ENCODE measurements at regions of chr1 and their contacts with region 1.

Region 1: DNA sequence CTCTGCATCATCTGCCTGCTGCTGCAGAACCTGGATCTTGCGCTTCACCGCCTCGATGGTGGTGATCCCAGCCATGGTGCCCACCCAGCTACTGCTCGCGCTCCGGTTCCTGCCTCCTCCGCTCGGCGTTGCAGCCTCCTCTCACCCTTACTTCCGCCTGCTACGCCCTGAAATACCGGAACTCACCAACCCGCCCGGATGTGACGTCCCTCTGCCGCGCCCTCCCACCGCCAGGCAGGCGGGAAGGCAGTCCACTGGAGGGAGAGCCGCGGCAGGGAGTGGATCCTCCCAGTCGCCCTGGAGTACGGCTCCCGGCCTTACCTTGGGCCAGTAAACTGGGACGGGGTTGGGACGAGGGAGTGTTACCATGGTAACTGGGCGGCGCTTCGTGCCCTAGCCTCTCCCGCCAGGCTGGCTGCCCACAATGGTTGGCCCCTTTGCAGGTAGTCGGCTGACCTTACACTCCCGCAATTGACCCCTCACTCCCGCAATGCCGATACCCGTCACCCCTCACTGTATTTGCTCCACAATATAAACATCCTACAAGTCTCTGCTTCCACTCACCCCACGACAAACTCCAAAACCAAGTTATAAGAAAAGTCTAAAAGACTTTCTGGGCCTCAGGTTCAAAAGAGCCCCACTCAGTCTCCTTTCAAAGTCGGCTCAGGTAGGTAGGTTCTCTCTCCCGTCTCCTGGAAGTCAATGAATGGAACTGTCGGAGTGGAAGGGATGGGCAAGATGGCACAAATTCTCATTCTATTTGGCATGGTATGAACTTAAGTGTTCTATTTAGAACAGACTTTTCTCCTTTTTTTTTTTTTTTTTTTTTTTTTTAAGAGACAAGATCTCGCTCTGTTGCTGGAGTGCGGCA is 8.6 kb downstream of the TPM3 start:
- DNase-seq: peak; percentile 91 to 96 (median 92)
- H3K4me3 ChIP-seq: peak overlapping the region; percentile 74 to 90
- H3K4me3 Mint-ChIP-seq: peak overlapping the region; percentile 99 to 100 (median 100)
- H3K27ac ChIP-seq: peak overlapping the region; percentile 93
- H3K27ac Mint-ChIP-seq: peak overlapping the region; percentile 98 to 100 (median 100)
- H3K4me1 ChIP-seq: peaks cover 42% of the 10 kb centered on the region
- H3K4me1 Mint-ChIP-seq: peaks cover 34 to 62% (median 46%) of the 10 kb centered on the region in 4 donors
- H3K27me3 ChIP-seq: no peaks in the 10 kb centered on the region
- H3K27me3 Mint-ChIP-seq: no peaks in the 10 kb centered on the region

Region 2: GRCh38 chr1:154006136-154006535 is 177.1 kb before region 1 on chr1:
- CTCF ChIA-PET with region 1: no interaction called
- POLR2A ChIA-PET with region 1: no interaction called
- intact Hi-C with region 1: no loop called
- DNase-seq: no peak
- H3K4me3 ChIP-seq: no peak overlapping the region
- H3K4me3 Mint-ChIP-seq: no peak overlapping the region
- H3K27ac ChIP-seq: no peak overlapping the region
- H3K27ac Mint-ChIP-seq: no peak overlapping the region
- H3K4me1 ChIP-seq: no peaks in the 10 kb centered on the region
- H3K4me1 Mint-ChIP-seq: no peaks in the 10 kb centered on the region
- H3K27me3 ChIP-seq: no peaks in the 10 kb centered on the region
- H3K27me3 Mint-ChIP-seq: no peaks in the 10 kb centered on the region

Region 3: GRCh38 chr1:154145986-154146385 is 37.3 kb before region 1 on chr1:
- CTCF ChIA-PET with region 1: no interaction called
- POLR2A ChIA-PET with region 1: no interaction called
- intact Hi-C with region 1: loop called (anchors 5 kb)
- DNase-seq: no peak
- H3K4me3 ChIP-seq: no peak overlapping the region
- H3K4me3 Mint-ChIP-seq: no peak overlapping the region
- H3K27ac ChIP-seq: no peak overlapping the region
- H3K27ac Mint-ChIP-seq: no peak overlapping the region
- H3K4me1 ChIP-seq: no peaks in the 10 kb centered on the region
- H3K4me1 Mint-ChIP-seq: peaks cover 0 to 7% (median 5%) of the 10 kb centered on the region in 4 donors
- H3K27me3 ChIP-seq: no peaks in the 10 kb centered on the region
- H3K27me3 Mint-ChIP-seq: no peaks in the 10 kb centered on the region

Region 4: GRCh38 chr1:154157520-154158306 is 25.6 kb before region 1 on chr1:
- CTCF ChIA-PET with region 1: interaction called, 6 read pairs
- POLR2A ChIA-PET with region 1: interaction called, 71 read pairs
- intact Hi-C with region 1: loop called (anchors 1 kb)
- DNase-seq: peak; percentile 80 to 91 (median 85)
- H3K4me3 ChIP-seq: peak overlapping the region in 1 of 2 donors; percentile 6
- H3K4me3 Mint-ChIP-seq: peak overlapping the region; percentile 50 to 88 (median 80)
- H3K27ac ChIP-seq: peak overlapping the region; percentile 47
- H3K27ac Mint-ChIP-seq: peak overlapping the region; percentile 89 to 96 (median 95)
- H3K4me1 ChIP-seq: peaks cover 66% of the 10 kb centered on the region
- H3K4me1 Mint-ChIP-seq: peaks cover 49 to 71% (median 61%) of the 10 kb centered on the region in 4 donors
- H3K27me3 ChIP-seq: no peaks in the 10 kb centered on the region
- H3K27me3 Mint-ChIP-seq: no peaks in the 10 kb centered on the region

Region 5: DNA sequence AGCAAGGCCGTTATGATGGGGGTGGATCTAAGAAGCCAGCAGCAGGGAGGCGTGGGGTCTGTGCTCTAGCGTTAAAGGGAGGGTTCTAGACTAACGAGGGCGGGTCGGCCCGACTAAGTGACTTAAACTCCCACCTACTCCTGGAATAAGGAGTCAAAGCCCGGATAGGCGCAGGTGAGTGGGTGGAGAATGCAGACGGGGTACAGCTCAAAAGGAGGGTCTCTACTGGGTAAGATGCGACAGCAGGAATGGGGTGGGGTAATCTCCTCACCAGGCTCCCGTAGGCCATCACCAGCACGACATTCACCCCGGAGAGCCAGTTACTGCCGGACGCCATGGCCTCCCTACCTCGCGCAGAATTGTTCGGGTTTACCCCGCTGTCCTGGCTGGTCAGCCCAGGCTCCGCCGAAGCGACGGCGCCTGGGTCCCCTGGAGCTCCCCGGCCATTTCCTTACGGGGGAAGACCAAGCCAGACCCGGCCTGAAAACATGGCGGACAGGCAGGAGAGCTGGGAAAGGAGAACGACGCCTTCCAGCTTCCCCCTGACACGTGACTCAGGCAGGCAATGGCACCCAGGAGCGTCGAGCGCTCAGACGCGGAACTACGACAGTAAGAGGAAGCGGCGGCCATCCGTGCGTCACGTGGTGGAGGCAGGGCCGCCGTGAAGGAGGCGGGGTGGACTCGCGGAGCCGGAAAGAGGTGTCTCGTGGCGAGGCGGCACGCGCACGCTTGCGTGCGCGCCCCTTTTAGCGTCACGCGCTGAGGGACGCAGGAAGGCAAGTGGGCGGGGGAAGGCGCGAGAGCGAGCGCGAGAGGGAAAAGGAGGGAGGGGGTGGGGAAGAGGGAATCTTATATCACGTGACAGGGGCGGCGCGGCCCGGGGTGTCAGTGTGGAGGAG is 37.0 kb after region 1 on chr1 and contains the start of gene UBAP2L:
- CTCF ChIA-PET with region 1: interaction called, 3 read pairs
- POLR2A ChIA-PET with region 1: interaction called, 4 read pairs
- intact Hi-C with region 1: loop called (anchors 1 kb)
- DNase-seq: peak; percentile 97 to 99 (median 99)
- H3K4me3 ChIP-seq: peak within 1 kb of the TSS; percentile 93 to 99
- H3K4me3 Mint-ChIP-seq: peak within 1 kb of the TSS; percentile 92 to 100 (median 97)
- H3K27ac ChIP-seq: peak within 1 kb of the TSS; percentile 97
- H3K27ac Mint-ChIP-seq: peak within 1 kb of the TSS; percentile 96 to 99 (median 99)
- H3K4me1 ChIP-seq: peaks cover 66% of the 10 kb centered on the region
- H3K4me1 Mint-ChIP-seq: peaks cover 52 to 78% (median 65%) of the 10 kb centered on the region in 4 donors
- H3K27me3 ChIP-seq: no peaks in the 10 kb centered on the region
- H3K27me3 Mint-ChIP-seq: no peaks in the 10 kb centered on the region
- total RNA-seq, gene UBAP2L: 180 to 189 TPM

Measured in CD4-positive, alpha-beta memory T cell (primary cell).